Activated naive CD4-positive, alpha-beta T cell treated with anti-CD3 and anti-CD28 coated beads, Interleukin-2, amount 10 ng/mL, durations not matched to agents 7 days and 5 days (primary cell): ENCODE measurements at regions of chr1 and their contacts with region 1.

Region 1: GRCh38 chr1:9270290-9270883 is 22.3 kb upstream of the SPSB1 start:
- DNase-seq: no peak
- H3K4me3 Mint-ChIP-seq: no peak overlapping the region
- H3K27ac Mint-ChIP-seq: no peak overlapping the region
- H3K4me1 Mint-ChIP-seq: peaks cover 18% of the 10 kb centered on the region
- H3K27me3 Mint-ChIP-seq: peaks cover 12% of the 10 kb centered on the region

Region 2: DNA sequence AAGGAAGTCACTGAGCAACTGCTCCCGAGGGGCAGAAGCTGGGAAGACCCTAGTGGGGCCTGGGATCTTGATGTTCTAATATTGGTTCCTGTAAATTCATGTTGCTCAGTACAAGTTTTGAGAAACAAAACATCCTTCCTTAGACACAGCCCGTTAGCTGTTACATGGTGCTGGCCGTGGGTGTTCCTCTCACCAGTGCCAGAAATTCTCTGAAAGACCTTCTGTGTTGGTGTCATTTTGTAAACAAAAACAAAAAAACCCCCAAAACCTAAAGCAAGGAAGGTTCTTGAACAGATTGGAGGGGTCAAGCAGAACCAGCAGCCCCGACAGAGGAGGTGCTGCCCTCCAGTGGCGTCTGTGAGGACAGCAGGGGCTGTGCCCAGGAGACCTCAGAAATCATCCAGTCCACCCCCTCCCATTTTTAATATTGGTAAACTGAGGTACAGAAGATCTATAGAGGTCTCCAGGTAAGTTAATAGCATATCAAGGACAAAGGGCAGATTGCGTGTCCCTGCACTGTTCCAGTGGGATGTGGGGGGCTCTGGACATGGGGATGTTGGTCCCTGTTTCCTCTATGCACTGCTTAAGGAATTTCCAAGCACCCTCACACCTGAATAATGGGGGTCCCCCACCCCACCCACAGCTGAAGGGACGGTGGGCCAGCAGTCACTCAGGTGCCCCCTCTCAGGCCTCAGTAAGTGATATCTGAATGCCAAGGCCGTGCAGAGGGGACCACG is 282.3 kb before region 1 on chr1:
- CTCF ChIA-PET with region 1: no interaction called
- DNase-seq: peak; percentile 80
- H3K4me3 Mint-ChIP-seq: peak overlapping the region; percentile 63
- H3K27ac Mint-ChIP-seq: peak overlapping the region; percentile 95
- H3K4me1 Mint-ChIP-seq: peaks cover 74% of the 10 kb centered on the region
- H3K27me3 Mint-ChIP-seq: no peaks in the 10 kb centered on the region

Region 3: DNA sequence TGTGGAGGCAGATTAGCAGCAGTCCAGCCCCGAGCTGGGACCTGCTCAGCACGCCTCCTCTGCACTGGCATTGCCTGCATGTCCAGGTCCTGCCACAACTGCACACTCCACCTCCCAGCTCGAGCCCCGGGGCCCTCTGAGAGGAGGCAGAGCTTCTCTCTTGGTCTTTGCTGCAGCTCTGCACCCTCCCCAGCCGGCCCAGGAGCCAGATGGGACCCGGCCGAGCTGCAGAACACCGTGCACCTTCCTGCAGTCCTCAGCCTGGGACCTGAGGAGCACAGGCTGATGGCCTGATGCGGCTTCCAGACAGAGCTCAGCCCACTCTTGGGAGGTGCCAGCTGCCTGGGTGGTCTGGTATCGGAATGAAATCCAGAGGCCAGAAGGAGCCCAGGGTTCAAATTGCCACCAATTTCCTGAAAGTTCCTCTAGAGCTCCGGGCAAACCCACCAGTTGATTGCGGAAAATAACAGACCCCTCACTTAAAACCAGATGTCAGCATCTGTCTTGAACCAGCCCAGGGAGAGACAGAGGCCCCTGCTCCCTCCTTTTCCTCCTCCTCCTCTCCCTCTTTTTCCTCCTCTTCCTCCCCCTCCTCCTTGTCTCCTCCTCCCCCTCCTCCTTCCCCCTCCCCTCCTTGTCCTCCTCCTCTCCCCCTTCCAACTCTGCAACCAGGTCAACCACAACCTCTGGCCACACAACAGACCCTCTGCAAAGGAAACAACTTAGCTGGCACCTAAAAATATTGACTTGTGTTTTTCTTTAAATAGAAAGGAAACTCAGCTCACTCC is 11.7 kb after region 1 on chr1:
- CTCF ChIA-PET with region 1: interaction called, 15 read pairs
- DNase-seq: no peak
- H3K4me3 Mint-ChIP-seq: no peak overlapping the region
- H3K27ac Mint-ChIP-seq: no peak overlapping the region
- H3K4me1 Mint-ChIP-seq: peaks cover 75% of the 10 kb centered on the region
- H3K27me3 Mint-ChIP-seq: peaks cover 32% of the 10 kb centered on the region

Region 4: GRCh38 chr1:9292361-9293240 is 22.2 kb after region 1 on chr1 and contains the start of gene SPSB1:
- CTCF ChIA-PET with region 1: interaction called, 14 read pairs
- DNase-seq: peak; percentile 76
- H3K4me3 Mint-ChIP-seq: peak within 1 kb of the TSS; percentile 62
- H3K27ac Mint-ChIP-seq: no peak within 1 kb of the TSS
- H3K4me1 Mint-ChIP-seq: peaks cover 12% of the 10 kb centered on the region
- H3K27me3 Mint-ChIP-seq: peaks cover 22% of the 10 kb centered on the region

Region 5: DNA sequence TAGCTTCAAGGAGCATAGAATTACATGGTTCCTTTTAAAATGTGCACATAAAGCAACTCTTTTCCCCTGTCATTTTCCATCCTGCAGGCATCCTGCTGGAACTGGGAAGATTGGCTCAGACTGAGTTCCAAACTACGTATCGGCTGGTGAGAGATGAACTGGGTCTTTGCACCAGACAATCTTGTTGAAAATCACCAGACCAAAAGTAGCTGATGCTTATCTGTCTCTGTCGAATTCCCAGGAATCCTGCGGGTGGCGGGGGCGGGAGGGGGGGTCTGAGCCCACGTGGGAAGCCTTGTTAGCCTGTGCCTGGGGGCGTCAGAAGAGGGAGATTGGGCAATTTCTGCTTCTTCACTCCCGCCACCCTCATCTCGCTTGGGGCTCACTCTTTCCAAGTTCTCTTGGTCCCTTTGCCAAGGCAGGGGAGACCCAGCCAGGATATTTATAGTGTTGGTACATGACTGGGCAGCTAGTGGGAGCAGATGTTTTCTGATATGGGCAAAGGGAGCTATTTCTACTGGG is 178.8 kb after region 1 on chr1:
- CTCF ChIA-PET with region 1: interaction called, 13 read pairs
- DNase-seq: no peak
- H3K4me3 Mint-ChIP-seq: no peak overlapping the region
- H3K27ac Mint-ChIP-seq: no peak overlapping the region
- H3K4me1 Mint-ChIP-seq: no peaks in the 10 kb centered on the region
- H3K27me3 Mint-ChIP-seq: peaks cover 45% of the 10 kb centered on the region

Region 6: DNA sequence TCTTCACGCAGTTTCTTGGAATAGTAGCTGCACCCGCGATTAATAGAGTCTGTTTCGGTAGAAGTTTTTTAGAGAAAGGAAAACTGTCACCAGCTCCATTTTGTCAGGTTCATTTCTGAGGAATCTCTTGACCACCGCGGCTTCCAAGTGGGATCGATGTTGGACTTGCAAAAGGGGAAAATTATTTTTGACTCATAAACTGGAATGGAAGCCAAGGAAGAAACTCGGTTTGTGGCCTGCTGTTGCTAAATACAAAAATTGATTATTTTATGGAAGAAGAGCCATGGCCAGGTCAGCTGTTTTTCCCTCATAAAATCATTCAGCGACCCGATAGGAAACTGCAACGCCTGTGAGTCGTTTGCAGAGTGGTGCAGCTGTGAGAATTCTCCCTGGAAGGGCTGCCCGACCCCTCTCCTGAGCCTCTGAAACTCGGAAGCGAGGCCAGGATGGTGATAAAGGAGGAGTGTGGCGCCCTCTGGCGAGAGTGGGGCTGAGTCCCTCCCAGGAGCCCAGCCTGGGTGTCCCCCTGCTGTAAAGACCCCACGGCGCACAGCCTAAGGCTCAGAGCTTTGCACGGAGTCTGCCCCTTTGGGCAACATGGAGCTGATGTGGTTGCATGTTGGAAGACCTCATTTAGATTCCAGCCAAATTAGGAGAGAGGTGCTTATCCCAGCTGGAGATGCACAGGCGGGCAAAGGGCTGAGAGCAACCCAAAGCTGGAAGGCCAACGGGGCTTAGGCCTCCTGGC is 185.3 kb after region 1 on chr1:
- CTCF ChIA-PET with region 1: interaction called, 65 read pairs
- DNase-seq: peak; percentile 76
- H3K4me3 Mint-ChIP-seq: no peak overlapping the region
- H3K27ac Mint-ChIP-seq: no peak overlapping the region
- H3K4me1 Mint-ChIP-seq: no peaks in the 10 kb centered on the region
- H3K27me3 Mint-ChIP-seq: peaks cover 21% of the 10 kb centered on the region

Region 7: GRCh38 chr1:9494929-9495758 is 224.8 kb after region 1 on chr1:
- CTCF ChIA-PET with region 1: interaction called, 64 read pairs
- DNase-seq: peak; percentile 70
- H3K4me3 Mint-ChIP-seq: peak overlapping the region; percentile 32
- H3K27ac Mint-ChIP-seq: no peak overlapping the region
- H3K4me1 Mint-ChIP-seq: peaks cover 10% of the 10 kb centered on the region
- H3K27me3 Mint-ChIP-seq: peaks cover 45% of the 10 kb centered on the region